ENCODE measurements at regions of chr10 and their contacts with region 1.

Region 1: GRCh38 chr10:62095181-62096071 is 173.2 kb downstream of the RTKN2 start:
- DNase-seq: peak; percentile 94
- ATAC-seq: peak; percentile 36
- H3K4me3 ChIP-seq: peak overlapping the region in 1 of 3 experiments; percentile 21; a peak in 1 of 6 replicates
- H3K27ac ChIP-seq: peak overlapping the region; percentile 95
- H3K4me1 ChIP-seq: peaks cover 83% of the 10 kb centered on the region
- H3K27me3 ChIP-seq: no peaks in the 10 kb centered on the region
- CTCF ChIP-seq: no peak
- EP300 ChIP-seq: peak; percentile 49 to 93; a peak in 3 of 4 replicates
- POLR2A ChIP-seq: no peak; a peak in 1 of 4 replicates
- RAD21 ChIP-seq: no peak

Region 2: GRCh38 chr10:61961278-61961677 is 134.1 kb before region 1 on chr10:
- CTCF ChIA-PET with region 1: no interaction called
- POLR2A ChIA-PET with region 1: interaction called, 6 read pairs
- in situ Hi-C with region 1: no loop called
- intact Hi-C with region 1: loop called (anchors 1 kb)
- DNase-seq: no peak
- ATAC-seq: no peak
- H3K4me3 ChIP-seq: no peak overlapping the region
- H3K27ac ChIP-seq: no peak overlapping the region
- H3K4me1 ChIP-seq: peaks cover 50% of the 10 kb centered on the region
- H3K27me3 ChIP-seq: no peaks in the 10 kb centered on the region
- CTCF ChIP-seq: no peak
- EP300 ChIP-seq: no peak
- POLR2A ChIP-seq: no peak
- RAD21 ChIP-seq: no peak

Region 3: GRCh38 chr10:62050893-62051433 is 44.5 kb before region 1 on chr10:
- CTCF ChIA-PET with region 1: no interaction called
- POLR2A ChIA-PET with region 1: interaction called, 156 read pairs
- in situ Hi-C with region 1: loop called (anchors 5 kb)
- intact Hi-C with region 1: loop called (anchors 1 kb)
- DNase-seq: peak; percentile 70
- ATAC-seq: no peak
- H3K4me3 ChIP-seq: peak overlapping the region; percentile 69 to 81 (median 71)
- H3K27ac ChIP-seq: peak overlapping the region; percentile 89
- H3K4me1 ChIP-seq: peaks cover 86% of the 10 kb centered on the region
- H3K27me3 ChIP-seq: no peaks in the 10 kb centered on the region; a peak in 1 of 5 replicates
- CTCF ChIP-seq: no peak
- EP300 ChIP-seq: no peak
- POLR2A ChIP-seq: no peak
- RAD21 ChIP-seq: no peak

Region 4: DNA sequence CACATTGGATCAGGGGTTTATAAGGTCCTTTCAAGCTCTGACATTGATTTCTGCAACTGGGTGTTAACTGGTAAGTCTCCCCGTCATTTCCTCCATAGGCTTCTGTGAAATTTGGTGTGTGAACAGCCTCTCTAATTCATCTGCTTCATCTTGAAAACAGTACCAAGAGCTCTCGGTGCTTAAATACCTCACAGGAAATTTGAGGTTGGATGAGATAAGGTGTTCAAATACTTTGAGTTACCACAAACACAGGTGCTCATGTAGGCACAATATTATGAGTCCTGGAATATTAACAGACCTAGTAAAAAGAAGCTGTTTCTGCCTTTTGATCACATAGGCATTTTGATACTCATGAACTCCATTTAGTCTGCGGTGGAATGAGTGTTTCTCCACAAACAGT is 88.0 kb after region 1 on chr10:
- CTCF ChIA-PET with region 1: no interaction called
- POLR2A ChIA-PET with region 1: interaction called, 5 read pairs
- in situ Hi-C with region 1: no loop called
- intact Hi-C with region 1: loop called (anchors 2 kb)
- DNase-seq: no peak
- ATAC-seq: peak; percentile 73
- H3K4me3 ChIP-seq: no peak overlapping the region
- H3K27ac ChIP-seq: peak overlapping the region; percentile 58
- H3K4me1 ChIP-seq: peaks cover 15% of the 10 kb centered on the region
- H3K27me3 ChIP-seq: no peaks in the 10 kb centered on the region
- CTCF ChIP-seq: no peak
- EP300 ChIP-seq: no peak
- POLR2A ChIP-seq: no peak
- RAD21 ChIP-seq: no peak

Measured in HepG2 (cell line).